Heart right ventricle (tissue), 16 donors: ENCODE measurements at regions of chr12 and their contacts with region 1.

Region 1: DNA sequence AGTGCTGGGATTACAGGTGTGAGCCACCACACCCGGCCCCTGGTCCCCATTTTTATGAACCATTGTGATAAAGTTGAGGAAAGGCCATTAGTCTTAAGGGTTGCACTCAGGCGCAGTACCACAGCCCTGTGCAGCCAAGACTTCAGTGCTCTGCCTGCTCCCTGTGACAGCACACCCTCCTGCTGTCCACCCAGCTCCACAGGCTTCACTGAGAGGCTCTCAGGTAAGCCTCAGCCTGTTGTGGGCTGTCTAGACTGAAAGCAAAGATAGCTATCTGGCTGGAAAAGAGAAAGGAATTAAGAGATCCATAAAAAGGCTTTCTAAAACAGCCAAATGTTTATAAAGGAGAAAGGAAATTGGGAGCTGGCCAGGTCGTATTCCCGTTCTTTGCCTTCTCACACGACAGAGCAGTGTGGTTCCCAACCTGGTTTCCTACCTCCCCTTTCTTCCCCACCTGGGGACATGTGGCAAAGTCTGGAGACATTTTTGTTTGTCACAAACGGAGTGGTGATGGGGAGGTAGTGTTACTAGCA is 19.1 kb upstream of the DNM1L start:
- DNase-seq: no peak
- ATAC-seq: no peak
- H3K4me3 ChIP-seq: no peak overlapping the region
- H3K27ac ChIP-seq: peak overlapping the region in 7 of 10 donors; percentile 6 to 59 (median 29)
- H3K4me1 ChIP-seq: peaks cover 0 to 26% (median 11%) of the 10 kb centered on the region in 9 donors
- H3K27me3 ChIP-seq: no peaks in the 10 kb centered on the region
- CTCF ChIP-seq: no peak

Region 2: DNA sequence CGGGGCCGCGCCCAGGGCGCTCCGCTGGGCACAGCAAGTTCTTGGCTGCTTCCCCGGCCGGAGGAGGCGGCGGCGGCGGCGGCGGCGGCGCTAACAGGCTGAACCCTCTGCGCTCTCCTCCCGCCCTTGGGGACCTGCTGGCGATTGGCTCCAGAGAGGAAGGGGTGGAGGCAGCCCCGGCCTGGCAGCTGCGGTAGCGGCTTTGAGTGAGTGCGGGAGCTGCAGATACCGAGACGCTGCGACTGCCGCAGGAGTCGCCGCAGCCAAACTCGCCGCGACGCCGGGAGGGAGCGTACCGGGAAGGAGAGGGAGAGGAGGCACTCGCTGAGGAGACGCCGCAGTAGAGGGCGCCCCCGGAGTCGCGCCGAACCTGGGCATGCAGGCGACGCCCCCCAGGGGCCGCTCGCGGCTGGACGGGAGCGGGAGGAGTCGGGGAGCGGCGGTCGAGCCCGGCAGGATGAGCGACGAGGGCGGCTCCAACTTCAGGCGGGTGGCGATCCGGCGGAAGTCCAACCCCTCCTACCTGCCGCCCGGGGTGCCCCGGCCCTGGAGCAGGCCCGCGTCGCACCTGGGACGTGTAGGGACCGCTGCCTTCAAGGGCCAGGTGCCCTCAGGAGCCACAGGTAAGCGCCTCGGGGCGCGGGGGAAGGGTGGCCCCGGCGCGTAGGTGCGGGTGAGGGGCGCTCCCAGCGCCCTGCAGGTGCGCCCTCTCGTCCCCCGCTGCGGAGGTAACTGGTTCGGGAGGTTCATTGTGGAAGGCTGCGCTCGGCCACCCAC is 260.4 kb before region 1 on chr12 and contains the start of gene FGD4:
- intact Hi-C with region 1: loop called in 1 of 10 experiments (anchors 1 kb)
- DNase-seq: peak; percentile 84 to 88
- ATAC-seq: peak; percentile 94 to 99 (median 97)
- H3K4me3 ChIP-seq: peak within 1 kb of the TSS; percentile 62 to 98 (median 89)
- H3K27ac ChIP-seq: peak within 1 kb of the TSS; percentile 64 to 93 (median 82)
- H3K4me1 ChIP-seq: peaks cover 0 to 39% (median 21%) of the 10 kb centered on the region in 9 donors
- H3K27me3 ChIP-seq: peaks cover 0 to 32% (median 0%) of the 10 kb centered on the region in 7 donors
- CTCF ChIP-seq: peak in 8 of 9 donors; percentile 23 to 70 (median 52)
- total RNA-seq, gene FGD4: 14.4 to 36.9 (median 26.5) TPM